ENCODE measurements at regions of chr17 and their contacts with region 1.

Region 1: DNA sequence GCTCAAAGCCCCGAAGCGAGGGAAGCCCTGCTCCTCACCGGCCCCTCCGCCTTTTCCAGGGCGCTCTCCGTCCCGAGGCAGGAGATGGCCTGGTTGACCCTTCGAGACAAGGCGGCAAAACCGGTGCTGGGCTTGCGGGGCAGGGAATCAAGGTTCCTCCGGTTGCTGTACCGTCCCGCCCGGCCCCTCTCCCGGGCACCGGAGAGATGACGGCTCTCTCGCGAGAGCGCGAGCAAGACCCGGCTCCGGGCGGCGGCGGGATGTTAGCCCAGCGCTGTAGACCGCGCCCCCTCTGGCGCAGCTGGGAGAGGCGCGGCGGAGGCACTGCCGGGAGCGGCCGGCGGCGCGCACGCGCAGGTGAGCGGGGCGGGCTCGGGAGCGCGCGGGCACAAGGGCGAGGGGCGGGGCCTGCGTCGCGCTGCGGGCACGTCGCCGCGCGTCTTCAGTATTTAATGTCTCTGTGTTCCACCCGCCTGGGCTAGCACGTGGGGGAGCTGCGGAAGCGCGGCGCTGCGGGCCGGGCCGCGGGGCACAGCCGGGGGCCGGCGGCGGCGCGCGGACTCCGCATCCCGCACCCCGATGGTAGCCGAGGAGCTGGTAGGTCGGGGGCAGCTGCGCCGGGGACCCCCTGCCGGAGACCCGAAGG is at the start of gene AKAP1:
- DNase-seq: peak; percentile 80 to 95
- H3K4me3 ChIP-seq: peak within 1 kb of the TSS; percentile 68 to 86 (median 84)
- H3K27ac ChIP-seq: peak within 1 kb of the TSS; percentile 92
- H3K4me1 ChIP-seq: peaks cover 5 to 21% (median 15%) of the 10 kb centered on the region in 4 experiments; a peak in 6 of 7 replicates
- H3K27me3 ChIP-seq: no peaks in the 10 kb centered on the region; a peak in 1 of 7 replicates
- CTCF ChIP-seq: peak; percentile 38 to 51 (median 43)
- EP300 ChIP-seq: no peak
- POLR2A ChIP-seq: peak; percentile 33 to 83
- RAD21 ChIP-seq: peak; percentile 31 to 53; a peak in 3 of 4 replicates
- total RNA-seq, gene AKAP1: 110 and 120 TPM in 2 replicates

Region 2: DNA sequence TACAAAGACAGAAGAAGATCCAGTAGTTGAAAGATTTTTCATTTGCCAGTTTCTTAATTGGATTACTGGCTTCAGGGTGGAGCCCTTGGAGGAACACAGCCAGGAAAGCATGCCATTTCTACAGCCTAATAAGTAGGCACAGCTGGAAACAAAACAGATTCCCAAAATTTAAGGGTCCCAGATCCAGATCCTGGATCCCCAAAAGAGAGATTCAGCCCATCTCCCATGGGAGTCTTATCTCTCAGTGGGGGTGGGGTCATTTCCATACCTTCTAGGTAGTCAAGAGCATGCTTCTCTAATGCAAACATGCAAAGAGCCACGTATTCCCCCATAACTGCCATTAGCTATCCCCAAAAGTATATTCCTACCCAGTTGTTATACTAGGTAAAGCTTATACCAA is 57.1 kb before region 1 on chr17:
- CTCF ChIA-PET with region 1: no interaction called
- POLR2A ChIA-PET with region 1: no interaction called
- DNase-seq: no peak
- H3K4me3 ChIP-seq: no peak overlapping the region
- H3K27ac ChIP-seq: no peak overlapping the region
- H3K4me1 ChIP-seq: peaks cover 0 to 5% (median 0%) of the 10 kb centered on the region in 4 experiments; a peak in 2 of 7 replicates
- H3K27me3 ChIP-seq: no peaks in the 10 kb centered on the region
- CTCF ChIP-seq: no peak
- EP300 ChIP-seq: no peak
- POLR2A ChIP-seq: no peak
- RAD21 ChIP-seq: no peak

Region 3: DNA sequence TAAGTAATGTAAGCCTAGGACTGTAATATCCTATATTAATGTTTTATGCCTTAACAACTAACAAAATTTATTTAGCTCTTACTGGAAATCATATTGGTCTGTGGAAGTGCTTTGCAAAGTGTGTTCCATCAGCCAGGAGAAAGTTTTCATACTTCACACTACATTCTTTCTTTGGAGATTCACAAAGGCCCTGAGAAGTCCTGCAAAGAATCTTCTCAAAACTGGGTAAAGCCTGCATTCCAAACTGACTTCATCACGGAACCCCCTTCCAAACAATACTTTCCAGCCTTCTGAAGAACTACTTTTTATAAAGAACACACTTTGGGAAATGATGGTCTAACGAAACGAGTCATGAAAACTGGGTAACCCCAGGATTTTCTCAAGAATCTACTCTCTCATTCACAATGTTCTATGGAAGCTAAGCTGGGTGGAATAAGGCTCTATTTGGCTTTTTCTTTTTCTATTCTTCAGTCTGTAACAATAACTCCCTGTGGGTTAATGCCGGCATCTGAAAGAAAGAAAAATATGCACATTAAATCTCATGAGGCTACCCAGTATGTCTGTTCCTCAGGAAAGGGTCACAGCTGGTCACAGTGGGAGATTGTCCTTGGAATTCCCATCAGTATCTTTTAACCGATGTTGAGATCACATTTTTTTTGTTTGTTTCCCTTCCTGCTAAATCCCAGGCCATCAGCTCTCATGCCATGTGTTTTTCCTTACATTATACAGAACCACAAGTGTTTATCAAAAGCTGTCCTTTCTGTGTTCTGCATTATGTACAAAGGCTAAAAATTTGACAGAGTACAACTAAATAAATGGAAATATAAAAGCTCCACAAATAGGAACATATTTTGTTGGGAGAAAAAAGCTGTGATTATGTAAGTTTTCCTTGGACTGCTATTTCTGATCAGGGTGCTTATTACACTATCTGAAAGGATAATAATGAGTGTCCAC is 12.7 kb before region 1 on chr17:
- CTCF ChIA-PET with region 1: interaction called, 10 read pairs
- POLR2A ChIA-PET with region 1: interaction called, 21 read pairs
- DNase-seq: no peak
- H3K4me3 ChIP-seq: 0 out of 8 replicates have a peak overlapping the region, but pooled peaks of 1 of the 4 experiments have one; percentile 9
- H3K27ac ChIP-seq: no peak overlapping the region; the same call in 1 of the 2 replicates
- H3K4me1 ChIP-seq: peaks cover 0 to 15% (median 8%) of the 10 kb centered on the region in 4 experiments; a peak in 5 of 7 replicates
- H3K27me3 ChIP-seq: no peaks in the 10 kb centered on the region
- CTCF ChIP-seq: no peak
- EP300 ChIP-seq: no peak
- POLR2A ChIP-seq: no peak
- RAD21 ChIP-seq: no peak

Region 4: DNA sequence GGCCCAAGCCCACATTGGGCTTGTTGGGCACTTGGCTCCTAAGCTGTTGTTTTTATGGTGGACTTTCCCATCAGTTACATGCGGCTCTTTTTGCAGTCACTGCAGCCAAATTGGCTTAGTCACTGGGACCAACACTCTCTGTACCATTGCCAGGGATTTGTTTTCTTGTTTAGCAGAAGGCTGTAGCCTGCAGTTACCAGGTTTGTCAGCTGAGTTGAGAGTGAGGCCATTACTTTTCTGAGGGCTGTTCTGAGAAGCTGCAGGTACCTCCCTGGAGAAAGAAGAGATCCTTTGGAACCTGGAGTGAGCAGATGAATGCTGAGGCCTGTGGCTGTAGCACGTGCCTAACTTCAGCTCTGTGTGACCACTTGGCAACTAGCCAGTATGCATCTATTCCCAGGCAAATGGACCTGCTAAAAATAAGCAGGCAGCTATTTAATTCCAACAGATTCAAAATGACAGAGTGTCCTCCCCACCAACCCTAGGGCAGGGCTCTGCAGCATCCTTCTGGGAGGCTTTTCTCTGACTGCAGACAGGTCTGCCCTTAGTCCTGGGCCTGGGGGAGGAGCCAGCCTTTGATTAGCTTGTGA is 13.0 kb after region 1 on chr17:
- CTCF ChIA-PET with region 1: interaction called, 4 read pairs
- POLR2A ChIA-PET with region 1: interaction called, 13 read pairs
- DNase-seq: no peak
- H3K4me3 ChIP-seq: no peak overlapping the region
- H3K27ac ChIP-seq: no peak overlapping the region
- H3K4me1 ChIP-seq: peaks cover 8 to 32% (median 16%) of the 10 kb centered on the region in 4 experiments
- H3K27me3 ChIP-seq: no peaks in the 10 kb centered on the region
- CTCF ChIP-seq: no peak
- EP300 ChIP-seq: no peak
- POLR2A ChIP-seq: no peak
- RAD21 ChIP-seq: no peak

Measured in H1 (cell line).